ENCODE measurements at regions of chr1 and their contacts with region 1.

Region 1: GRCh38 chr1:158506369-158506987 is 34.5 kb downstream of the OR10R2 start:
- DNase-seq: peak in 2 of 10 donors; percentile 14 to 44
- H3K4me3 ChIP-seq: no peak overlapping the region
- H3K27ac ChIP-seq: no peak overlapping the region
- H3K27me3 ChIP-seq: peaks cover 0 to 11% (median 0%) of the 10 kb centered on the region in 45 donors
- CTCF ChIP-seq: peak in 32 of 56 donors; percentile 7 to 43 (median 25)

Region 2: GRCh38 chr1:158613764-158614163 is 107.3 kb after region 1 on chr1:
- intact Hi-C with region 1: no loop called
- DNase-seq: no peak
- H3K4me3 ChIP-seq: no peak overlapping the region
- H3K27ac ChIP-seq: no peak overlapping the region
- H3K27me3 ChIP-seq: no peaks in the 10 kb centered on the region
- CTCF ChIP-seq: no peak

Region 3: GRCh38 chr1:159071970-159072582 is 565.6 kb after region 1 on chr1:
- intact Hi-C with region 1: loop called in 1 of 2 experiments (anchors 10 kb)
- DNase-seq: no peak
- H3K4me3 ChIP-seq: no peak overlapping the region
- H3K27ac ChIP-seq: no peak overlapping the region
- H3K27me3 ChIP-seq: peaks cover 0 to 5% (median 0%) of the 10 kb centered on the region in 45 donors
- CTCF ChIP-seq: peak; percentile 43 to 92 (median 82)

Measured in dorsolateral prefrontal cortex (tissue), 120 donors.